Activated naive CD4-positive, alpha-beta T cell treated with anti-CD3 and anti-CD28 coated beads, Interleukin-2, amount 10 ng/mL, durations not matched to agents 7 days and 5 days (primary cell): ENCODE measurements at regions of chr17 and their contacts with region 1.

Region 1: GRCh38 chr17:44167181-44167861 is 3.2 kb upstream of the ASB16 start:
- DNase-seq: no peak
- H3K4me3 Mint-ChIP-seq: no peak overlapping the region
- H3K27ac Mint-ChIP-seq: no peak overlapping the region
- H3K4me1 Mint-ChIP-seq: peaks cover 5% of the 10 kb centered on the region
- H3K27me3 Mint-ChIP-seq: no peaks in the 10 kb centered on the region

Region 2: GRCh38 chr17:44044067-44044466 is 123.3 kb before region 1 on chr17:
- CTCF ChIA-PET with region 1: interaction called, 10 read pairs
- DNase-seq: no peak
- H3K4me3 Mint-ChIP-seq: no peak overlapping the region
- H3K27ac Mint-ChIP-seq: peak overlapping the region; percentile 33
- H3K4me1 Mint-ChIP-seq: peaks cover 21% of the 10 kb centered on the region
- H3K27me3 Mint-ChIP-seq: no peaks in the 10 kb centered on the region

Region 3: GRCh38 chr17:44149750-44150329 is 17.5 kb before region 1 on chr17:
- CTCF ChIA-PET with region 1: interaction called, 17 read pairs
- DNase-seq: no peak
- H3K4me3 Mint-ChIP-seq: no peak overlapping the region
- H3K27ac Mint-ChIP-seq: peak overlapping the region; percentile 21
- H3K4me1 Mint-ChIP-seq: peaks cover 16% of the 10 kb centered on the region
- H3K27me3 Mint-ChIP-seq: no peaks in the 10 kb centered on the region